Heart left ventricle (tissue), 16 donors: ENCODE measurements at regions of chr1 and their contacts with region 1.

Region 1: GRCh38 chr1:245156081-245156735 is 1.4 kb downstream of the KIF26B start:
- DNase-seq: peak; percentile 78 to 92 (median 83)
- ATAC-seq: peak; percentile 71 to 94 (median 90)
- H3K4me3 ChIP-seq: peak overlapping the region; percentile 49 to 72 (median 61)
- H3K27ac ChIP-seq: peak overlapping the region in 2 of 12 donors; percentile 16 to 23
- H3K4me1 ChIP-seq: peaks cover 3 to 43% (median 34%) of the 10 kb centered on the region in 12 donors
- H3K27me3 ChIP-seq: peaks cover 0 to 82% (median 25%) of the 10 kb centered on the region in 9 donors
- CTCF ChIP-seq: peak; percentile 44 to 87 (median 77)
- POLR2A ChIP-seq: no peak

Region 2: GRCh38 chr1:245380790-245381535 is 224.8 kb after region 1 on chr1:
- intact Hi-C with region 1: loop called (anchors 2 to 5 kb)
- DNase-seq: no peak
- ATAC-seq: no peak
- H3K4me3 ChIP-seq: no peak overlapping the region
- H3K27ac ChIP-seq: no peak overlapping the region
- H3K4me1 ChIP-seq: no peaks in the 10 kb centered on the region
- H3K27me3 ChIP-seq: peaks cover 0 to 12% (median 0%) of the 10 kb centered on the region in 9 donors
- CTCF ChIP-seq: peak; percentile 11 to 56 (median 40)
- POLR2A ChIP-seq: no peak

Region 3: GRCh38 chr1:245687594-245688535 is 531.7 kb after region 1 on chr1:
- intact Hi-C with region 1: loop called in 1 of 10 experiments (anchors 10 kb)
- DNase-seq: no peak
- ATAC-seq: no peak
- H3K4me3 ChIP-seq: no peak overlapping the region
- H3K27ac ChIP-seq: no peak overlapping the region
- H3K4me1 ChIP-seq: peaks cover 0 to 12% (median 6%) of the 10 kb centered on the region in 12 donors
- H3K27me3 ChIP-seq: peaks cover 0 to 8% (median 0%) of the 10 kb centered on the region in 9 donors
- CTCF ChIP-seq: no peak
- POLR2A ChIP-seq: no peak

Region 4: GRCh38 chr1:245874942-245875580 is 718.9 kb after region 1 on chr1:
- intact Hi-C with region 1: loop called in 1 of 10 experiments (anchors 10 kb)
- DNase-seq: peak; percentile 80 to 96 (median 88)
- ATAC-seq: peak; percentile 86 to 94 (median 90)
- H3K4me3 ChIP-seq: peak overlapping the region in 2 of 12 donors; percentile 13 to 19
- H3K27ac ChIP-seq: peak overlapping the region in 10 of 12 donors; percentile 20 to 70 (median 50)
- H3K4me1 ChIP-seq: peaks cover 0 to 41% (median 19%) of the 10 kb centered on the region in 12 donors
- H3K27me3 ChIP-seq: no peaks in the 10 kb centered on the region
- CTCF ChIP-seq: no peak
- POLR2A ChIP-seq: no peak

Region 5: GRCh38 chr1:246117066-246117791 is 961.0 kb after region 1 on chr1:
- intact Hi-C with region 1: loop called in 4 of 10 experiments (anchors 5 to 10 kb)
- DNase-seq: peak in 1 of 5 donors; percentile 12
- ATAC-seq: peak in 2 of 4 donors; percentile 56 to 74
- H3K4me3 ChIP-seq: no peak overlapping the region
- H3K27ac ChIP-seq: no peak overlapping the region
- H3K4me1 ChIP-seq: peaks cover 0 to 8% (median 0%) of the 10 kb centered on the region in 12 donors
- H3K27me3 ChIP-seq: no peaks in the 10 kb centered on the region
- CTCF ChIP-seq: peak in 11 of 12 donors; percentile 27 to 65 (median 45)
- POLR2A ChIP-seq: no peak

Region 6: GRCh38 chr1:246497331-246497915 is 1341.2 kb after region 1 on chr1:
- intact Hi-C with region 1: loop called in 8 of 10 experiments (anchors 1 to 10 kb)
- DNase-seq: no peak
- ATAC-seq: peak in 1 of 4 donors; percentile 31
- H3K4me3 ChIP-seq: no peak overlapping the region
- H3K27ac ChIP-seq: no peak overlapping the region
- H3K4me1 ChIP-seq: peaks cover 0 to 3% (median under 1%) of the 10 kb centered on the region in 12 donors
- H3K27me3 ChIP-seq: no peaks in the 10 kb centered on the region
- CTCF ChIP-seq: peak; percentile 61 to 83 (median 72)
- POLR2A ChIP-seq: no peak